ENCODE measurements at regions of chr11 and their contacts with region 1.

Region 1: DNA sequence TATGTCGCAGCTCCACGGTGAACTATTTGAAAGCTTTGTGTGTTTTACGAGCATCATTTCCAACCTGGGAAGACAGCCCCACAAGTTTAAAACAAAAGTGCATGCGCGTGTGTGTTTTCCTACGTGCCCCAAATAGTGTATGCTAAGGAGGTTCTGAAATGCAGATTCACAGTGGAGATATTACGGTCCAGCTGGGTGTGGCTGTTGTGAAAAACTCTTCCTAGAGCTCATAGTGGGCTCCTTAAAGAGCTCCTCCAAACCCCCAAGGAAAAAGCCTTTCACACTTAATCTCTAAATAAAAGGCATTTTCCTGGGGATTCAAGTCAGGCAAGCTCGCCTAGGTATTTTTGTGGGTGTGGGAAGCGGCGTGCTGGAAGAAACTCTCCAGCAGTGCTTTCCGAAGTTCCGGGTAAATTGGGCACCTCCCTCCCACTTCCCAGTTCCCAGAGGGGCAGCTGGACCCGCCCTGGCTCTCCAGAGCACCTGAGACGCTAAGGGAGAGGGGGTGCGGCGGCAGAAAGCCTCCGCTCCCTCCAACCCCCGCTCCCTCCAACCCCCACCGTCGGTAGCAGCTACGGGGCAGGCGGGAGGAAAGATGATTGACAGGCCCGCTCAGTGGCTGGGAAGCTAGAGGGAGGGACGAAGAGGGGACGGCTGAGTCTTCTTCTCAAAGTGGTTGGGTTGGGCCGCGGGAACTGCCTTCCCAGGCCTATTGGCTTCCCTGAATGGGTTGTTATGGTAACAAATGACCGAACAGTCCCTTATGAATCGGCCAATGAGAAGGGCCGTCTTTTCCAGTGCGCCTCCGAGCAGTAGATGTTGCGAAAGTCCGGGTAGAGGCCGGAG is 558 bp upstream of the PCF11 start:
- DNase-seq: peak; percentile 93 to 100
- ATAC-seq: peak; percentile 83 to 95 (median 87)
- H3K4me3 ChIP-seq: peak overlapping the region; percentile 68
- H3K4me3 Mint-ChIP-seq: peak overlapping the region; percentile 95
- H3K27ac ChIP-seq: peak overlapping the region; percentile 91
- H3K27ac Mint-ChIP-seq: peak overlapping the region; percentile 99 to 100
- H3K4me1 ChIP-seq: peaks cover 15% of the 10 kb centered on the region
- H3K4me1 Mint-ChIP-seq: peaks cover 30 to 33% of the 10 kb centered on the region in 2 donors
- H3K27me3 ChIP-seq: no peaks in the 10 kb centered on the region
- H3K27me3 Mint-ChIP-seq: no peaks in the 10 kb centered on the region
- CTCF ChIP-seq: no peak

Region 2: GRCh38 chr11:82900277-82901164 is 255.9 kb before region 1 on chr11 and contains the start of gene PRCP:
- intact Hi-C with region 1: loop called (anchors 1 kb)
- DNase-seq: peak; percentile 91 to 95
- ATAC-seq: peak; percentile 75 to 90 (median 79)
- H3K4me3 ChIP-seq: peak within 1 kb of the TSS; percentile 94
- H3K4me3 Mint-ChIP-seq: peak within 1 kb of the TSS; percentile 98
- H3K27ac ChIP-seq: peak within 1 kb of the TSS; percentile 99
- H3K27ac Mint-ChIP-seq: peak within 1 kb of the TSS; percentile 97 to 99
- H3K4me1 ChIP-seq: peaks cover 32% of the 10 kb centered on the region
- H3K4me1 Mint-ChIP-seq: peaks cover 50 to 59% of the 10 kb centered on the region in 2 donors
- H3K27me3 ChIP-seq: no peaks in the 10 kb centered on the region
- H3K27me3 Mint-ChIP-seq: no peaks in the 10 kb centered on the region
- CTCF ChIP-seq: no peak
- total RNA-seq, gene PRCP: 28.1 to 30.0 (median 30.0) TPM

Region 3: GRCh38 chr11:82959987-82960778 is 196.2 kb before region 1 on chr11:
- intact Hi-C with region 1: loop called (anchors 2 kb)
- DNase-seq: peak in 1 of 2 donors; percentile 85
- ATAC-seq: peak; percentile 76 to 86 (median 86)
- H3K4me3 ChIP-seq: peak overlapping the region; percentile 2
- H3K4me3 Mint-ChIP-seq: peak overlapping the region; percentile 83
- H3K27ac ChIP-seq: peak overlapping the region; percentile 91
- H3K27ac Mint-ChIP-seq: peak overlapping the region; percentile 92 to 97
- H3K4me1 ChIP-seq: peaks cover 41% of the 10 kb centered on the region
- H3K4me1 Mint-ChIP-seq: peaks cover 62 to 71% of the 10 kb centered on the region in 2 donors
- H3K27me3 ChIP-seq: no peaks in the 10 kb centered on the region
- H3K27me3 Mint-ChIP-seq: no peaks in the 10 kb centered on the region
- CTCF ChIP-seq: no peak

Region 4: DNA sequence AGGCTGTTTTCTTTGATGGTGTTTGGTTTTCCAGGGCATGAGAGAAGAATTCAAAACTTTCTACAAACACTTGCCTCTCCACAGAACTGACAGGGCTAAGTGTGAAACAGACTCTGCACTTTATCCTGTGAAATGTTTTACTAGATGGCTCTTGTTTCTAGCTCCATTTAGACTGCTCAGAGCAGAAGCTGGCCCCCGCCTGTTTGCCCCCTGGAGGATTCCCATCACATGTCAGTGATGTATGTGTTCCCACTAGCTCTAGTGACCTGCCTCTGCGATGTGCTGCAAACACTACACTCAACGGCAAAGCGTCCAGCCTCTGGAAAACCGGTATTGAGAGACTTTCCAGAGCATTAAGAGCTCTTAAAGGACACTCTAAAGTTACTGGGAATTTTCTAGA is 40.8 kb before region 1 on chr11:
- intact Hi-C with region 1: loop called (anchors 2 kb)
- DNase-seq: peak in 1 of 2 donors; percentile 9
- ATAC-seq: peak in 1 of 3 donors; percentile 26
- H3K4me3 ChIP-seq: no peak overlapping the region
- H3K4me3 Mint-ChIP-seq: peak overlapping the region; percentile 76
- H3K27ac ChIP-seq: no peak overlapping the region
- H3K27ac Mint-ChIP-seq: peak overlapping the region; percentile 66 to 83
- H3K4me1 ChIP-seq: peaks cover 27% of the 10 kb centered on the region
- H3K4me1 Mint-ChIP-seq: peaks cover 30 to 31% of the 10 kb centered on the region in 2 donors
- H3K27me3 ChIP-seq: no peaks in the 10 kb centered on the region
- H3K27me3 Mint-ChIP-seq: no peaks in the 10 kb centered on the region
- CTCF ChIP-seq: no peak

Region 5: GRCh38 chr11:83220279-83220678 is 63.9 kb after region 1 on chr11:
- intact Hi-C with region 1: no loop called
- DNase-seq: no peak
- ATAC-seq: no peak
- H3K4me3 ChIP-seq: no peak overlapping the region
- H3K4me3 Mint-ChIP-seq: no peak overlapping the region
- H3K27ac ChIP-seq: no peak overlapping the region
- H3K27ac Mint-ChIP-seq: no peak overlapping the region
- H3K4me1 ChIP-seq: no peaks in the 10 kb centered on the region
- H3K4me1 Mint-ChIP-seq: no peaks in the 10 kb centered on the region
- H3K27me3 ChIP-seq: no peaks in the 10 kb centered on the region
- H3K27me3 Mint-ChIP-seq: no peaks in the 10 kb centered on the region
- CTCF ChIP-seq: no peak

Region 6: GRCh38 chr11:83285771-83286528 is 129.6 kb after region 1 on chr11 and contains the start of gene CCDC90B:
- intact Hi-C with region 1: loop called (anchors 1 kb)
- DNase-seq: peak; percentile 90 to 98
- ATAC-seq: peak; percentile 89 to 96 (median 89)
- H3K4me3 ChIP-seq: peak within 1 kb of the TSS; percentile 81
- H3K4me3 Mint-ChIP-seq: peak within 1 kb of the TSS; percentile 96
- H3K27ac ChIP-seq: peak within 1 kb of the TSS; percentile 97
- H3K27ac Mint-ChIP-seq: peak within 1 kb of the TSS; percentile 99 to 100
- H3K4me1 ChIP-seq: peaks cover 4% of the 10 kb centered on the region
- H3K4me1 Mint-ChIP-seq: peaks cover 21 to 26% of the 10 kb centered on the region in 2 donors
- H3K27me3 ChIP-seq: no peaks in the 10 kb centered on the region
- H3K27me3 Mint-ChIP-seq: peaks cover 0 to 8% of the 10 kb centered on the region in 2 donors
- CTCF ChIP-seq: no peak
- total RNA-seq, gene CCDC90B: 27.3 to 30.2 (median 29.5) TPM

Measured in natural killer cell (primary cell).